Activated CD4-positive, alpha-beta memory T cell treated with anti-CD3 and anti-CD28 coated beads, Interleukin-2, amount 10 ng/mL, durations not matched to agents 7 days and 5 days (primary cell): ENCODE measurements at regions of chr1 and their contacts with region 1.

Region 1: DNA sequence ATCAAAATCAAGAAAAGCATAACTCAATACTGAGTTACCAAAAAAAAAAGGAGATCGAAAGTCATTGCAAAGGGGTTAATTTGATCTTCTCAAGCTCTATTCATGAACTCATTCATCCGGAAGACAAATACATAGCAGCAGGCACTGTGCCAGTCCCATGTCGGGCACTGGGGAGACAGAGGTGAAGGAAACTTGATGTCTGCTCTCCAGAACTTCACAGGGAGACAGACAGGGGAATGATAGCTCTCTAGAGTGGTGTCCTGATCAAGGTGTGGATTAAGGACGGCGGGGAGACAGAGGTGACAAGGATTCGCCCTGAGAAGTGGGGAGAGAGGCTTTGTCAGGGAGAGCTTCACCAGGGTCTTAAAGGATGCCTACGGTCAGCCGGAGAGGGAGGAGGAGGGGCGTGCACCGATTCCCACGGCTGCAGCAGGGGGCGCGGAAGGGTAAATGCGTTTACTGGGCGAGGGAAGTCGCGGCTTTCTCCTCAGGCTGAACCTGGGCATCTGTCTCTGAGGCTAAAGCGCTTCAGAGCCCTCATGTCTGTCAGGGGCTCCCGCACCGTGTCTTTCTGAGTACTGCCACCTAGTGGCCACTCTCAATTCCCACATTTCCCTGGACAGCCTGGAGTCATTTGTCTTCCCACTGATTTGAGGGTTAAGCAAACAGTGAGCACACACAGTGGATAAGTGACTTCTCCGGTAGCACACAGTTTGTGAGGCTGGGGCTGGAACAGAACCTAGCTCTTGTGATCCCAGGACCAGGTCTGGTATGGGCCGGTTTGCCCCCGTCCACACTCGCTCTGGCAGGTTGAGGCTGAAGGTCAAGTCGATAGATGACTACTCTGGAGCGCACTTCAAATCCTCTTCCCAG is 152.8 kb downstream of the TENT5C start:
- DNase-seq: peak; percentile 73
- H3K4me3 Mint-ChIP-seq: peak overlapping the region; percentile 66
- H3K27ac Mint-ChIP-seq: no peak overlapping the region
- H3K4me1 Mint-ChIP-seq: peaks cover 17% of the 10 kb centered on the region
- H3K27me3 Mint-ChIP-seq: peaks cover 13% of the 10 kb centered on the region

Region 2: GRCh38 chr1:117534995-117535467 is 223.6 kb before region 1 on chr1:
- CTCF ChIA-PET with region 1: interaction called, 220 read pairs
- POLR2A ChIA-PET with region 1: interaction called, 7 read pairs
- DNase-seq: peak; percentile 36
- H3K4me3 Mint-ChIP-seq: no peak overlapping the region
- H3K27ac Mint-ChIP-seq: no peak overlapping the region
- H3K4me1 Mint-ChIP-seq: peaks cover 3% of the 10 kb centered on the region
- H3K27me3 Mint-ChIP-seq: no peaks in the 10 kb centered on the region

Region 3: GRCh38 chr1:117622726-117623125 is 136.0 kb before region 1 on chr1:
- CTCF ChIA-PET with region 1: interaction called, 14 read pairs
- POLR2A ChIA-PET with region 1: no interaction called
- DNase-seq: no peak
- H3K4me3 Mint-ChIP-seq: no peak overlapping the region
- H3K27ac Mint-ChIP-seq: peak overlapping the region; percentile 37
- H3K4me1 Mint-ChIP-seq: peaks cover 65% of the 10 kb centered on the region
- H3K27me3 Mint-ChIP-seq: no peaks in the 10 kb centered on the region

Region 4: GRCh38 chr1:117689997-117690625 is 68.6 kb before region 1 on chr1:
- CTCF ChIA-PET with region 1: interaction called, 14 read pairs
- POLR2A ChIA-PET with region 1: no interaction called
- DNase-seq: no peak
- H3K4me3 Mint-ChIP-seq: no peak overlapping the region
- H3K27ac Mint-ChIP-seq: no peak overlapping the region
- H3K4me1 Mint-ChIP-seq: peaks cover 20% of the 10 kb centered on the region
- H3K27me3 Mint-ChIP-seq: peaks cover 15% of the 10 kb centered on the region

Region 5: DNA sequence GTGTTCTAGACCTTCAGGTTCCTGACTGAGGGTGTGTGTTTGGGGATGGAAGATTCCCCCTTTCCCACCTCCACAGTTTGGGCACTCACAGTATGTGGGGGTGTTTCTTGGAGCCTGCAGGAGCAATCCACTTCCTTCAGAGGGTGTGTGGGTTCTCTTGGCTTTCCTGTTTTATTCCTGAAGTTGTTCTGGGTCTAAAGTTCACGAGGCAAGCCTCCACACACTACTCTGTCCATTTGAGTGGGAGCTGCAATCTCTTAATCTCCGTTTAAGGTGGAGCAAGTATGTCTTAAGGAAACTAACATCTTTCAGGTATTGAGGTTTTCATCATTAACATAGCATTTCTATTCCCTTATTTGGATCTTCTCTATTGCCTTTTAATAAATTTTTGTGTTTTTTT is 11.1 kb before region 1 on chr1:
- CTCF ChIA-PET with region 1: interaction called, 17 read pairs
- POLR2A ChIA-PET with region 1: no interaction called
- DNase-seq: no peak
- H3K4me3 Mint-ChIP-seq: no peak overlapping the region
- H3K27ac Mint-ChIP-seq: no peak overlapping the region
- H3K4me1 Mint-ChIP-seq: no peaks in the 10 kb centered on the region
- H3K27me3 Mint-ChIP-seq: peaks cover 22% of the 10 kb centered on the region